PC-9 (cell line): ENCODE measurements at regions of chr2 and their contacts with region 1.

Region 1: GRCh38 chr2:237201461-237202287 is 116.0 kb downstream of the COPS8 start:
- DNase-seq: peak; percentile 94 to 97
- H3K4me3 ChIP-seq: peak overlapping the region; percentile 36; the same call in 1 of the 2 replicates
- H3K27ac ChIP-seq: peak overlapping the region; percentile 86
- H3K4me1 ChIP-seq: peaks cover 64% of the 10 kb centered on the region
- H3K27me3 ChIP-seq: no peaks in the 10 kb centered on the region
- CTCF ChIP-seq: no peak

Region 2: DNA sequence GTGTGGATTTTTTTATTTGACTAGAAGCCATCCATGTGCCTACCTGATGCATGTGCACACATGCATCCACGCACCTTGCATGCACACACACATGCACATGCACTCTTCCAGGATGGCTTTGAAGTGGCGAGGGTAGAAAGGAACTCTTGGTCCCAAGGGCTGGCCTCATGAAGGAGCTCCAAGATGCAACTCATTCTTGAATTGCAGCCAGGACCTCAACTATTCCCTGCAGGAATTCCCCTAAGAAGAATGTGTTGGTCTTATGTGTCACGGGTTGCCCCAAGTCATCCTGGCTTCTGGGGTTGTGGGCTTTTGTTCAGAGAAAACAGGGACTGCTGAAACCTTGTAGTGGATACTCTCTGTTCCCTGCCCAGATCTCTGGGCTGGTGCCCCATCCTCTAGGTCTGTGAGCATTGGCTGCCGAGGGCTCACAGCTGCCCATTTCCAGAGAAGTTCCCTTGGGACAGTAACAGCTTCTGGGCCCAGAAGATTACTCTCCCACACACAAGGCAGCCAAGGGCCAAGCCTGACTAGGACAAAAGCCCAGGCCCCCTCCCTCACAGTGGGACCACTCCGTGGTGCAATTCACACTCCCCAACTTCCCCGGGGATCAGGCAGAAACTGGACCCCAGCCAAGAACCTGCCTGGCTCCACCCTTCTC is 21.7 kb after region 1 on chr2:
- CTCF ChIA-PET with region 1: interaction called, 3 read pairs
- POLR2A ChIA-PET with region 1: interaction called, 3 read pairs
- intact Hi-C with region 1: loop called (anchors 2 kb)
- DNase-seq: peak; percentile 60 to 71
- H3K4me3 ChIP-seq: no peak overlapping the region
- H3K27ac ChIP-seq: 0 out of 2 replicates have a peak overlapping the region, but pooled peaks have one; percentile 30
- H3K4me1 ChIP-seq: peaks cover 28% of the 10 kb centered on the region
- H3K27me3 ChIP-seq: no peaks in the 10 kb centered on the region
- CTCF ChIP-seq: no peak

Region 3: GRCh38 chr2:238305092-238305862 is 1103.6 kb after region 1 on chr2:
- CTCF ChIA-PET with region 1: no interaction called
- POLR2A ChIA-PET with region 1: interaction called, 13 read pairs
- intact Hi-C with region 1: no loop called
- DNase-seq: no peak
- H3K4me3 ChIP-seq: no peak overlapping the region
- H3K27ac ChIP-seq: no peak overlapping the region
- H3K4me1 ChIP-seq: no peaks in the 10 kb centered on the region
- H3K27me3 ChIP-seq: no peaks in the 10 kb centered on the region
- CTCF ChIP-seq: peak; percentile 56; the same call in 1 of the 2 replicates